A549 (cell line): ENCODE measurements at regions of chr17 and their contacts with region 1.

Region 1: DNA sequence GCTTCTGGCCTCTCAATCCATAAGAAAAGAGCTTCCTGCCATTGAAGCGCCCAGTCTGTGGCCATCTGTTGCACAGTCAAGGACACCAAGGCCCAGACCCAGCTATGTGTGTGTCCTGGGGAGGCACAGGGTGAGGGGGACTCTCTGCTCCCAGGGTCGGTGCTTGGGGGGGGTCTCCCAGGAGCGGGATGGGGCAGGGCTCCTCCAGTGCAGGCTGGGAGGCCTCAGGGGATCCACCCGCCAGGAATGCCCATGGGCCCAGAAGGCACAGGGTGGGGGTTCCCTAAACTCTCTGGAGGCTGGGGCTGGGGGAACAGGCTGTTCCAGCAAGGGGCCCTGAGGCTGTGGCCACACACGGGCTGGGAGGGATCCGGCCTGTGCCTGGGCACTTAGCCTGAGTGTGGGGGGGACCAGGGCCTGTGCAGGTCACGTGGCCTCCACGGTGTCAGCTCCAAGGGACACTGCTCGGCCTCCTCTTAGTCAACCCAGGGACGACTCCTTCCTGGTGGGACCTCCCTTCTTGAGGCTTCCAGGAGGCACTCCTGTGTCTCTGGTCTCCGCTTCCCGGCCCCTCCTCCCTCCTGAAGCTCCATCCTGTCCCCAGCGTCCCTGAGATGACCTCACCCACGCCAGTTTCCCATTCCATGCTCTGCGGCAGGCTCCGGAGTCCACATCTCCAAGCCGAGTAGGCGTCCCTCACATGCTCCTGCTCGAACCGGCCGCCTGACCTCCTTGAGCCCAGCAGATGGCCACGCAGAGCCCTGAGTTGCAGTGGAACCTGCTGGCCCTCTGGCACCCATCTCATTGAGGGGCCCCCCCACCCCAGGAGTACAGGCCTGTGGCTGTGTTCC is 23.1 kb upstream of the BAHCC1 start:
- DNase-seq: peak; percentile 73 to 77
- ATAC-seq: peak; percentile 91 to 95
- H3K4me3 ChIP-seq: no peak overlapping the region
- H3K27ac ChIP-seq: peak overlapping the region; percentile 19 to 36; a peak in 2 of 6 replicates
- H3K4me1 ChIP-seq: peaks cover 5% of the 10 kb centered on the region
- CTCF ChIP-seq: peak; percentile 55
- EP300 ChIP-seq: no peak
- POLR2A ChIP-seq: no peak
- RAD21 ChIP-seq: peak; percentile 69 to 71; a peak in 4 of 5 replicates

Region 2: DNA sequence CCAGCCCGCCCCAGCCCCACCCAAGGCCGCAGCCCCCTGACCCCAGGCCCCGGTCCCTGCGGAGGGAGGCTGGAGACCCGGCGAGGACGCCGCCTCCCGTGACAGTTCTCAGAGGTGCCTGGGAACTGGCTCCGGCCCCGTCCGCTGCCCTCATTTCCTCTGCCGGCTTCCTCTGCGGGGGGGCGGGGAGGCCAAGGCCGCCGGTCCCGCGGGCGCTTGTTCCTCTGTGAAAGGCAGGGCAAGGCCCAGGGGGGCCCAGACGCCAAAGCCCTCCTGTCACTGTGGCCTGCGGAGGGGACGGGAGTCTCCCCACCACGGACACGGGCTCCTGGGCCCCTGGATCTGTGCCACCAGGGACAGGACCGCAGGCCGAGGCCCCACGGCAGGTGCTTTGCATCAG is 211.8 kb before region 1 on chr17:
- CTCF ChIA-PET with region 1: no interaction called
- POLR2A ChIA-PET with region 1: no interaction called
- DNase-seq: no peak
- ATAC-seq: no peak
- H3K4me3 ChIP-seq: no peak overlapping the region
- H3K27ac ChIP-seq: no peak overlapping the region
- H3K4me1 ChIP-seq: peaks cover 2% of the 10 kb centered on the region; the same call in 1 of the 3 replicates
- CTCF ChIP-seq: no peak
- EP300 ChIP-seq: no peak
- POLR2A ChIP-seq: no peak
- RAD21 ChIP-seq: no peak

Region 3: GRCh38 chr17:81279278-81280275 is 92.6 kb before region 1 on chr17:
- CTCF ChIA-PET with region 1: no interaction called
- POLR2A ChIA-PET with region 1: no interaction called
- DNase-seq: no peak
- ATAC-seq: no peak
- H3K4me3 ChIP-seq: no peak overlapping the region
- H3K27ac ChIP-seq: no peak overlapping the region
- H3K4me1 ChIP-seq: no peaks in the 10 kb centered on the region
- CTCF ChIP-seq: no peak
- EP300 ChIP-seq: no peak
- POLR2A ChIP-seq: no peak
- RAD21 ChIP-seq: no peak

Region 4: DNA sequence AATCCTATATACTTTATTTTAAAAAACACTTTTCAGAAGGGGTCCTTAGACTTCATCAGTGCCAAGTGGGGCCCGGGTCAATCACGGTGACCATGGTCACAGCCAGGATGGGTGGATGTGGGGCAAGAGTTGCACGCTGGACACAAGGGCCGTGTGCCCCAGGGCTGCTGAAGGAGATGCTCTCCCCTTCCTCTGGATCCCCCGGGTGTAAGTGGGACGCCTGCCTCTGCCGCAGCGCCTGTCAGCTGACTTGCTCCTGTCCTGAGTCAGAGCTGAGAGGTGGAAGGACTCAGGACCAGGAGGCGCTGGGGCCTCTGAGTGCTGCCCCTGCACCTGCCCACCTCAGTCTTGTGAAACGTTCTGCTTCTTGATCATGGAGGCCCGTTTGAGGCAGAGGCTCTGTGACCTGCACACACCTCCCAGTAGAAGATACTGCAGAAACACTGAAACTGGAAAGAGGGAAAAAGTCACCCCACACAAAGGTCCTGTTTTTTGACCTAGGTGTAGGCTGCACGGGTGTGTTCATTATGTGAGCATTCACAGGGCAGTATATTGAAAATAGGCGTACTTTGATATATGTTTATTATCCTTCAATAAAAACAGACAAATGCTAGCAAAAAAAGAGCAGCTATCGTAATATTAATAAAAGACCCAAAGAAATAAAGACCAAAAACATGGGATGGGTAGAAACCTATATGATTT is 17.7 kb before region 1 on chr17:
- CTCF ChIA-PET with region 1: interaction called, 23 read pairs
- POLR2A ChIA-PET with region 1: no interaction called
- DNase-seq: no peak
- ATAC-seq: 0 out of 6 replicates have a peak, but pooled peaks of 1 of the 2 experiments have one; percentile 22
- H3K4me3 ChIP-seq: no peak overlapping the region
- H3K27ac ChIP-seq: no peak overlapping the region
- H3K4me1 ChIP-seq: 0 out of 3 replicates have a peak, but pooled peaks cover 4% of the 10 kb centered on the region
- CTCF ChIP-seq: no peak
- EP300 ChIP-seq: no peak
- POLR2A ChIP-seq: no peak
- RAD21 ChIP-seq: no peak

Region 5: GRCh38 chr17:81412490-81413093 is 40.5 kb after region 1 on chr17:
- CTCF ChIA-PET with region 1: no interaction called
- POLR2A ChIA-PET with region 1: no interaction called
- DNase-seq: no peak
- ATAC-seq: no peak
- H3K4me3 ChIP-seq: no peak overlapping the region
- H3K27ac ChIP-seq: peak overlapping the region in 1 of 2 experiments; percentile 45; a peak in 3 of 6 replicates
- H3K4me1 ChIP-seq: peaks cover 24% of the 10 kb centered on the region
- CTCF ChIP-seq: no peak
- EP300 ChIP-seq: no peak
- POLR2A ChIP-seq: no peak
- RAD21 ChIP-seq: no peak

Region 6: DNA sequence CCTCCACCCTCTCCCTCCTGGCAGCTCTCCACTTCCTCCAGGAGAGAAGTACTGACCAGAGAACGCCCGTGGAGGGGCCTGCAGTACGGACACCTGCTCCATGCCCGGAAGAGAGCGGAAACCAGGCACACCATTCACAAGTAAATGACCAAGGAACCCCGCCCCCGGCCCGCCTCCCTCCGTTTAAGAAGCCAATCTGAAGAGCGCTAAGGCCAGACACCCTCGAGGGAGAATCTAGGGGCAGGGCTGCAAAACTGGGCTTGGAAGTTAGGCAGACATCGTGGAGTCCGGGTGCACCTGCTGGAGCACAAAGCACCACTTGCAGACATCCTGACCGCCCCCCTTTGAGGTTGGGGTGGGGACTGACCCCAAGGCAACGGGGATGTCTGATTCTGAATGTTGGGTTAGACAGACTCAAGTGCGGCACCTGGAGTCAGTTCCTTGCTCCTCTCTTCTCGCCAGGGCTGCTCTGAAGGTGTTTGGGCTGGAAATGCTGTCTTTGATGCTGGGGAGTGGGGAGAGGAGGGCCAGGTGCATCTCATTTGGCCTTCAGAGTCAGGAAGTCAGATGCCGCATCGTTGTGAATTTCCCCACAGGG is 181.0 kb after region 1 on chr17:
- CTCF ChIA-PET with region 1: no interaction called
- POLR2A ChIA-PET with region 1: no interaction called
- DNase-seq: peak; percentile 92 to 97
- ATAC-seq: peak; percentile 75 to 84
- H3K4me3 ChIP-seq: peak overlapping the region; percentile 86
- H3K27ac ChIP-seq: peak overlapping the region; percentile 84 to 97
- H3K4me1 ChIP-seq: peaks cover 50% of the 10 kb centered on the region
- CTCF ChIP-seq: no peak
- EP300 ChIP-seq: no peak
- POLR2A ChIP-seq: peak; percentile 75
- RAD21 ChIP-seq: peak in 1 of 2 experiments; percentile 23; a peak in 3 of 5 replicates